ENCODE measurements at regions of chr10 and their contacts with region 1.

Region 1: GRCh38 chr10:59625721-59626522 is 83.7 kb downstream of the SLC16A9 start:
- DNase-seq: peak; percentile 58
- H3K4me3 ChIP-seq: no peak overlapping the region
- H3K27ac ChIP-seq: no peak overlapping the region
- H3K27me3 ChIP-seq: no peaks in the 10 kb centered on the region
- CTCF ChIP-seq: peak; percentile 80

Region 2: GRCh38 chr10:59234816-59235429 is 391.0 kb before region 1 on chr10:
- CTCF ChIA-PET with region 1: interaction called, 35 read pairs
- POLR2A ChIA-PET with region 1: no interaction called
- DNase-seq: peak; percentile 15
- H3K4me3 ChIP-seq: no peak overlapping the region
- H3K27ac ChIP-seq: no peak overlapping the region
- H3K27me3 ChIP-seq: no peaks in the 10 kb centered on the region
- CTCF ChIP-seq: peak; percentile 75

Region 3: DNA sequence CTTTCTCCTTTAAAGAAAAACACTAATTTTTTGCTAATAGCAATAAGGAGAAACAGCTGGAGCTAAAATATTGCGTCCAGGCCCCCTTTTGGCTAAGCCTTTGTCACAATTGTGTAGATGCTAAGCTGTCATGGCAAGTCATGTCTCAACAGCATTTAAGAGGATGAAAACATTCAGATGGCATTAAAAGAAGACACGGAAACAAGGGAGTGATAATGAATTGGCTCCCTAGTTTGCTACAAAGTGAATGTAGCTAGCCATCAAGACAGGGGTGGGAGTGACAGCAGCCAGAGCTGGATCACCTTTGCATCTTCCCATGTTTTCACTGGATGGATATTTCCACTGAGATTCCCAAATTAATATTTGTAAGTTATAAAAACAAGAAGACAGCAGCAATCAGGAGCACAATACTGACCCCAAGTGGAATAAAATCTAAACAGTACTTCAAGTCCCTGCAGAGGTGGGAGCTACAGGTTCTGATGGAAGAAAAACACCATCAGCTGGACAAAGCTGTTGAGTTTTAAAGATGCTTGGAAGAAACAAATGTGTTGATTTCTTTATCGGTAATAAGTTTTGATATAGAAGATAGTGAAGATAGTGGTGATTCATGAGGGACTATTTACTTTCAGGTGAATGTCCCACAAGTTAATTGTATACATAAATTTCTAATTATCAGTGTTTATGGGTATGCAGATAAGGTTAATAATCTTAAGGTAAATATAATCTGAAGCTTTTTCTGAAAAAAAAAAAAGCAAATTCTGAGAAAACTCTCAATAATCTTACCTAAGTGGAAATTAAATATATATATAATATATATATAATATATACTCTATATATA is 45.7 kb before region 1 on chr10:
- CTCF ChIA-PET with region 1: interaction called, 10 read pairs
- POLR2A ChIA-PET with region 1: no interaction called
- DNase-seq: peak; percentile 29
- H3K4me3 ChIP-seq: no peak overlapping the region
- H3K27ac ChIP-seq: no peak overlapping the region
- H3K27me3 ChIP-seq: no peaks in the 10 kb centered on the region
- CTCF ChIP-seq: peak; percentile 65

Region 4: DNA sequence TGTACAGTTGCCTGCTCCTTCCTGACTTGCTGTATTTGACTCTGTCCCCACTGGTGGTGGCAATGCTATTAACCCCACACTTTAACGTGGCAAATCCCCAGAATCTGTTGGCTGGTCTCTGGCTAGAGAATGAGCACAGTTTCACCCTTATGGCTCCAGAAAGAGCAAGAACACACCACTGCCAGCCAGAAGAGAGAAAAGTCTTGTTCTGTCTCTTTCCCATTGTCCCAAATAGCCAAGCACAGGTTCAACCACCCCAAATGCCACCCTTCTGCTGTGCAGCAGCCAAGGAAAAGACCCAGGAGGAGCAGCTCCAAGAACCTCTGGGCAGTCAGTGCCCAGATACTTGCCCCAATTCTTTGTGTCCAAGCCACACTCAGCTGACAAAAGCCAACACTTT is 72.4 kb after region 1 on chr10:
- CTCF ChIA-PET with region 1: no interaction called
- POLR2A ChIA-PET with region 1: no interaction called
- DNase-seq: no peak
- H3K4me3 ChIP-seq: no peak overlapping the region
- H3K27ac ChIP-seq: no peak overlapping the region
- H3K27me3 ChIP-seq: no peaks in the 10 kb centered on the region
- CTCF ChIP-seq: no peak

Region 5: DNA sequence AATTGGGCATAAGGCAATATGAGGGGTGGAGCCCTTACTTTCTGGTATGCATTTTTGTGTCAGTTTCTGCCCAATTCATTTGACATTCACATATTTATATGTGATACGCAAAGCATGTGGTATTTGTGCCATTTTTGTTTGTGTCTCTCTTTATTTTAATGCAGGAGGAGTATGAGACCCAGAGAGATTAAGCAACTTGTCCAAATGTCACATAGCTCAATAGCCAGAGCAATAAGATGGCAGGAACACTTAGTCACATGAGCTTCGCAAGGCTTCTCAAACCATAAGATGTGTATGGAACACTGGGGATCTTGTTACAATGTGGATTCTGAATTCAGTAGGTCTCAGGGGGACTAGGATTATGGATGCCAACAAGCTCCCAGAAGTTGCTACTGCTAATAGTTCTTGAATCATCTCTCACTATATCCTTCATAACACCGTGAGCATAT is 108.1 kb after region 1 on chr10:
- CTCF ChIA-PET with region 1: no interaction called
- POLR2A ChIA-PET with region 1: no interaction called
- DNase-seq: no peak
- H3K4me3 ChIP-seq: no peak overlapping the region
- H3K27ac ChIP-seq: no peak overlapping the region
- H3K27me3 ChIP-seq: no peaks in the 10 kb centered on the region
- CTCF ChIP-seq: no peak

Region 6: DNA sequence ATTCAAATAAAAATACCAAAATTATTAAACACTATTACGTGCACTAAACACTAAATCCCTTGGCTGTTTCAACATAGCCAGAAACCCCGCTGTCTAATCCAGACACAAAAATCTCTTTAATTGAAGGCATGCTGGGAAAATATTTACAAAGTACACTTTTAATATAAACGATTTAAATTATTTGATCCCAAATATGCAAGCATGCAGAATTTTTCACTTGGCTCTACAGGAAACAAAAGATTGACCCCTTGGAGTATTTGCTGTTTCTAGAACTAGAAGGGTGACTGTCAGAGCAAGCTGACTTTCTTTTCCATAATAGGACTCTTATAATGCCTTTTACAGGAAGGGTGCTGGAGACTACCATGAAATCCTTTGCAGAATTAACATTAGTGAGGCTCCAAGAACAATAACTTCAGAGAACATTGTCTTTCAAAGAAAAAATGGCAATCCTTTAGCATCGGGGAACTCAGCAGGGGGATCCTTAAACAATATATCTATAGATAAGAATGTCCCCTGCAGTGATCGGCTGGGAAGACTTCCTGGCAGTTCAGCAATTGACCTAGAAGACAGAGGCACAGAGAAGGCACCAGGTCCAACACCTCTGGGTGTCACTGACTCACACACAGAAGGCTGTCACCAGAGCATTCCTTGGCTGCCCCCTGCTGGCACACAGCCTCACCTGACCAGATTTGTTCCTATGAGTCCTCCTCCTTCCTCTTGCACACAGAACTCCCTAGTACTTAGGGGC is 183.1 kb after region 1 on chr10:
- CTCF ChIA-PET with region 1: interaction called, 10 read pairs
- POLR2A ChIA-PET with region 1: no interaction called
- DNase-seq: no peak
- H3K4me3 ChIP-seq: no peak overlapping the region
- H3K27ac ChIP-seq: no peak overlapping the region
- H3K27me3 ChIP-seq: no peaks in the 10 kb centered on the region
- CTCF ChIP-seq: peak; percentile 54

Region 7: GRCh38 chr10:59880971-59881510 is 255.1 kb after region 1 on chr10:
- CTCF ChIA-PET with region 1: no interaction called
- POLR2A ChIA-PET with region 1: no interaction called
- DNase-seq: no peak
- H3K4me3 ChIP-seq: no peak overlapping the region
- H3K27ac ChIP-seq: no peak overlapping the region
- H3K27me3 ChIP-seq: no peaks in the 10 kb centered on the region
- CTCF ChIP-seq: no peak

Region 8: DNA sequence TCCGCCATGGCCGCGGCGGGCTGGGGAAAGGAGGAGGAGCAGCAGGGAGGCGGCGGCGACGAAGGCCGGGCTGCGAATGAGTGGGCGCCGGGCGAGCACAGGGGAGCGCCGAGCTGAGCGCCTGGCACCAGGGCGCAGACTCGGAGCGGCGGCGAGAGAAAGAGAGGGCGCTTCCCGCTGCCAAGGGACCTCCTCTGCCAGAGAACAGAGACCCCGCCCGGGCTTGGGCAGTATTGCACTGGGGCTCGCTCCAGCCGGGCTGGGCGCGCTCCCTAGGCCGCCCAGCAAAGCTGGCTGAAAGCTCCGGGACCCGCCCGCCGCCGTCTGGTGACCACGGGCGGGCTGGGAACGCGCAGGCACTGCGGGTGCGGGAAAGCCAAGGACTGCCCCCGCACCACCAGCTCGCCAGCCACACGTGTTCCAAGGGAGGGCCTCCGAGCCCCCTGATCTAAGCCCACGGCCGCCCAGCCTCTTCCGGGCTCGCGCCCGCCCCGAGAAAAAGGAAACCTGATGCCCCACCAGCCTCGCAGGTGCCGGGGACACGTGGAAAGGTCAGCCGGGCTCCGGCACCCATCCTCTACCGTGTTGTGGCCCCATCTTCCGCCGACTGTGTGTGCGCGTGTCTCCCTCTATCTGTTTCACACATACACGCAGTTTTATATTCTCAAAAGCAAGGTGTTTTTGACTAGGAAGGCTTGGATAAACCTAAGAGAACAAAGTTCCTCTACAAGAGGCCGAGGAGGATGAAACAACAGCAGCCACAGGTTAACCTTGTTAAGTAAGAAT is 280.7 kb after region 1 on chr10 and contains the start of gene CCDC6:
- CTCF ChIA-PET with region 1: interaction called, 10 read pairs
- POLR2A ChIA-PET with region 1: no interaction called
- DNase-seq: peak; percentile 81
- H3K4me3 ChIP-seq: peak within 1 kb of the TSS; percentile 92
- H3K27ac ChIP-seq: peak within 1 kb of the TSS; percentile 88
- H3K27me3 ChIP-seq: no peaks in the 10 kb centered on the region
- CTCF ChIP-seq: peak; percentile 72
- polyA plus RNA-seq, gene CCDC6: 42.2 and 51.1 TPM in 2 replicates

Measured in AG04450 (cell line).